Activated CD4-positive, alpha-beta T cell treated with anti-CD3 and anti-CD28 coated beads, Interleukin-2, amount 10 ng/mL, durations not matched to agents 24 days and 14 days (primary cell): ENCODE measurements at regions of chr10 and their contacts with region 1.

Region 1: DNA sequence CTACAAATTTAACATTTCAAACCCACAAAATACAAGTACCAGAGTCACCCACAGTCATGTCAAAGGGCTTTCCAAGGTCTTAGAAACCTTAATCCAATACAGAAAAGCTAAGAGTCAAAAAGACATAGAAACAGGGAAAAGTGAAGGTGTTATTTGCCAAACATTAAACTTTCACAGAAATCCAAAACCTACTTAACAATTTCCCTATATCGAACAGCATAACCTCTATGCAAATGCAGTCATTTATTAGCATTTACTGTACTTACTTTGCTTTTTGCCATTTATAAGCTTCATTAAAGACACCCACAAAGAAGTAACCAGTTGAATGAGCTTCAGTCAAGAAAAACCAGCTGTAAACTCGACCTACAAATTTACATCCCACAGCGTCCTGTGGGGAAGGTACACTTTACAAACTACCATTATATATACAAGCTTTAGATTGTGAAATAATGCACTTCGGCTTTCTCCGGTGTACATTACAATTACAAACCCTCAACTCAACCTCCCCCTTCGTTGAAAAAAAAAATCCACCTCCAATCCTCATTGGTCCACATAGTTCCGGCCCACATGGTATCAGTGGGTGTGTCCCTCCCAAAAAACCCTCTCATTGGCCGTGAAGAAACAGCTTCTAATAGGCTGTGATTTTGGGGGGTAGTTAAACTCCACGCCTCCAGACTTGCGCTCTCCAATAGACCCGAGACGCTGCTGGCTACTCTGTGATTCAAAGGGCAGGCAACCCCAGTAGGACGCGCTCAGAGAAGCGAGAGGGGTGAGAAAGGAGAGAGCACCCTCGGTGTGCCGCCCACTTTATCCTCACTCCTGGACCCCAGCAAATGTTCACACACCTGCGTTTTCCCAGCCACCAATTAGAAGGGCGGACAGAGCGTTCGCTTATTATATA is 1.4 kb downstream of the PANK1 start:
- DNase-seq: peak; percentile 93
- H3K4me3 Mint-ChIP-seq: no peak overlapping the region
- H3K27ac Mint-ChIP-seq: no peak overlapping the region
- H3K4me1 Mint-ChIP-seq: peaks cover 10% of the 10 kb centered on the region
- H3K27me3 Mint-ChIP-seq: peaks cover 17% of the 10 kb centered on the region

Region 2: GRCh38 chr10:89609833-89610346 is 33.8 kb before region 1 on chr10:
- intact Hi-C with region 1: loop called (anchors 2 kb)
- DNase-seq: no peak
- H3K4me3 Mint-ChIP-seq: no peak overlapping the region
- H3K27ac Mint-ChIP-seq: peak overlapping the region; percentile 18
- H3K4me1 Mint-ChIP-seq: peaks cover 16% of the 10 kb centered on the region
- H3K27me3 Mint-ChIP-seq: no peaks in the 10 kb centered on the region

Region 3: DNA sequence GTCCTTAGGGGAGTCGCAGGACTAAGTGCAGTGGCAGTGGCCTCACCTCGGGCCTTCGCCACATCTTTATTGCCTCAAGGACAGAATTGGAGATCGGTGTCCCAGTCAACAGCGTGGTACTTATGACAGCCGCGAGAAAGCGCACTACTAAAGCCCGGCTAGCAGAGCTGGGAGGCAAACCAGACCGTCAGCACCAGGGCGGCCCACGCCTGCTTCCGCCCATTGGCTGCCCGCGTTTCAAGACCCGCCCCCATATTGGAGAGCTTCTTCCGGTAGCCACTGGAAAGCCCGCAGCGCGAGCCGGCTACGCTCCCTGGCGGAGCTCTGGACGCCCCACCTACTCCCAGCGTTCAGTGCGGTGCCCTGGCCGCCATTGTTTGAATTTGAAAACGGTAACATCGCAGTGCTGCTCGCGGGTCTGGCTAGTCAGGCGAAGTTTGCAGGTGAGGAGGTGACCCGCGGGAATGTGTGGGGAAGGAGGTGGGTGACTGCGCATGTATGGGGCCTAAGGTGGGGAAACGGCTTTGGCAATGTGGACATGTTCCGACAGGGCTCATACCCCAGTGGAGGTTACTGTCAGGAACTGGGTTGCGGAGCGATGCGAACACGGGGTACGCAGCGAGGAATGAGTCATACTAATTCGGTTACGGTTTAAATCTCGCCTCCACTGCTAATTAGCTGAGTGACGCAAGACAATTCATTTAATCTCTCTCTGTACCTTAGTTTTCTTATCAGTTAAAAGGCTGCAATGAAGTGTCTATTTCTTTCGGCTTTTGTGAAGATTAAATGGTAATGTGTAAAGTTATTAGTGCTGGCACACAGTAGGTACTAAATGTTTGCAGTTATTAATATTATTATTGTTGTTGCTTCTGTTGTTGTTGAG is 57.8 kb after region 1 on chr10 and contains the start of gene KIF20B:
- intact Hi-C with region 1: loop called (anchors 1 kb)
- DNase-seq: peak; percentile 99
- H3K4me3 Mint-ChIP-seq: peak within 1 kb of the TSS; percentile 95
- H3K27ac Mint-ChIP-seq: peak within 1 kb of the TSS; percentile 98
- H3K4me1 Mint-ChIP-seq: peaks cover 42% of the 10 kb centered on the region
- H3K27me3 Mint-ChIP-seq: no peaks in the 10 kb centered on the region
- total RNA-seq, gene KIF20B: 55.0 and 55.6 TPM in 2 replicates